ENCODE measurements at regions of chr2 and their contacts with region 1.

Region 1: GRCh38 chr2:197464175-197464574 is 10.8 kb downstream of the COQ10B start:
- DNase-seq: no peak
- ATAC-seq: no peak
- H3K4me3 Mint-ChIP-seq: no peak overlapping the region
- H3K27ac Mint-ChIP-seq: no peak overlapping the region
- H3K4me1 Mint-ChIP-seq: peaks cover 7% of the 10 kb centered on the region
- H3K27me3 Mint-ChIP-seq: no peaks in the 10 kb centered on the region

Region 2: GRCh38 chr2:196565106-196565765 is 898.9 kb before region 1 on chr2:
- CTCF ChIA-PET with region 1: no interaction called
- POLR2A ChIA-PET with region 1: interaction called, 10 read pairs
- intact Hi-C with region 1: no loop called
- DNase-seq: no peak
- ATAC-seq: no peak
- H3K4me3 Mint-ChIP-seq: no peak overlapping the region
- H3K27ac Mint-ChIP-seq: no peak overlapping the region
- H3K4me1 Mint-ChIP-seq: no peaks in the 10 kb centered on the region
- H3K27me3 Mint-ChIP-seq: peaks cover 22% of the 10 kb centered on the region

Region 3: GRCh38 chr2:197480165-197481036 is 16.2 kb after region 1 on chr2:
- CTCF ChIA-PET with region 1: no interaction called
- POLR2A ChIA-PET with region 1: interaction called, 11 read pairs
- intact Hi-C with region 1: no loop called
- DNase-seq: no peak
- ATAC-seq: no peak
- H3K4me3 Mint-ChIP-seq: no peak overlapping the region
- H3K27ac Mint-ChIP-seq: peak overlapping the region; percentile 48
- H3K4me1 Mint-ChIP-seq: peaks cover under 1% of the 10 kb centered on the region
- H3K27me3 Mint-ChIP-seq: no peaks in the 10 kb centered on the region

Region 4: GRCh38 chr2:197873293-197873701 is 409.1 kb after region 1 on chr2:
- CTCF ChIA-PET with region 1: no interaction called
- POLR2A ChIA-PET with region 1: no interaction called
- intact Hi-C with region 1: no loop called
- DNase-seq: no peak
- ATAC-seq: peak; percentile 51
- H3K4me3 Mint-ChIP-seq: no peak overlapping the region
- H3K27ac Mint-ChIP-seq: no peak overlapping the region
- H3K4me1 Mint-ChIP-seq: peaks cover 66% of the 10 kb centered on the region
- H3K27me3 Mint-ChIP-seq: no peaks in the 10 kb centered on the region

Region 5: DNA sequence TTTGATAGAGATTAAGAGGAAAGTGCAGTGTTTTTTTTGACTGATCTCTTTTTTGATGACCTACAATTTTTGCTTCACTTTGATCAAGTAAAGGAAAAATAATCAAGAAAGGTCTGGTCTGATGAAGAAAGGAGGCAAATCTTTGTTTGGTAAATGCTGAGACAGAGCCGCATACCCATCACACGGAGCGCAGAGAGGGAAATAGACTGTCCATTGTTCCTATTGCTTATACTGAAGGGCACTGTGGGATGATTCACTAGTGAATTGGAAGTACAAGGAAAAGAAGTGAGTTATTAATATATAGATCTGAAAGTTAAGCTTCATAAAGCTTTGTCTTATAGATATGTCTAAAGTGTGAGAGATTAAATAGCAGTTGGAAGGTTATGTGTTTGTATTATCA is 795.3 kb after region 1 on chr2:
- CTCF ChIA-PET with region 1: no interaction called
- POLR2A ChIA-PET with region 1: no interaction called
- intact Hi-C with region 1: no loop called
- DNase-seq: no peak
- ATAC-seq: no peak
- H3K4me3 Mint-ChIP-seq: no peak overlapping the region
- H3K27ac Mint-ChIP-seq: no peak overlapping the region
- H3K4me1 Mint-ChIP-seq: no peaks in the 10 kb centered on the region
- H3K27me3 Mint-ChIP-seq: peaks cover 23% of the 10 kb centered on the region

Measured in activated CD4-positive, alpha-beta T cell treated with anti-CD3 and anti-CD28 coated beads for 36 hours (primary cell).